ENCODE measurements at regions of chr19 and their contacts with region 1.

Region 1: DNA sequence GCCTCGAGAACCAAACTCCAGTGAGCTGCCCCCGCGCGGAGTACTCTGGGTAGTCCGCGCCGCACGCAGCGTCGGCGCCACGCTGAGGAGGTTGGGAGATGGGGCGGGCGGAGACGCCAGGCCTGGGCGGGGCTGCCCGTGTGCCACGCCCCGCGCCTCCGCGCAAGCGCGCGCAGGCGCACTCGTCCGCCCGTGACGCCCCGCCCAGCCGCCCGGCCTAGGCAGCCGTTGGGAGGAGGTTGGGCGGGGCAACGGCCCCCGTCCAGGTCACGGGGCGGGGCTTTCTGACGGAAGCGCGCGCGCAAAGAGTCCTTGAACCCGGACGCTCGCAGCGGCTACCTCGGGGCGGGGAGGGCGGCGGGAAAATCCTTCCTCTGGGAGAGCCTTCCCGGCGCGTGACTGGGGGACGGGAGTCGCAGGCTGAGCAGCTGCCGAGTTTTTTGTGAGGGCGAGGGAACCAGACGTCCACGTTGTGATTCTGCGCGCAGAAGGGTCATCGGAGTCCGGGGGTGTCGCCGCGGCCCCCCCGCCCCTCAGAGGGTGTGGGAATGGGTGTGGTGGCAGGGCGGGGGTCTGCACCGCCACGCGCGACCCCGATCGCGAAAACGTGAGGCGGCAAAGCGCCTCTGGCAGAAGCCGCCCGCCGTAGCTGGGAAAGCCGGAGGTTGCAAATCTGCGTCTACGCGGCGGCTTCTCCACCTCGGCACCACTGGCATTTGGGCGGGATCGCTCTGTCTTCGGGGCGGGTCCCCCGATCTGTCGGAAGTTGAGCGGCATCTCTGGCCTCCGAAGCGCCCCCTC is at the start of gene MED26:
- DNase-seq: peak; percentile 66 to 94
- H3K4me3 ChIP-seq: peak within 1 kb of the TSS; percentile 95 to 97
- H3K27ac ChIP-seq: peak within 1 kb of the TSS; percentile 81 to 93
- H3K4me1 ChIP-seq: peaks cover 7 to 17% of the 10 kb centered on the region in 2 donors
- H3K27me3 ChIP-seq: no peaks in the 10 kb centered on the region
- CTCF ChIP-seq: no peak
- total RNA-seq, gene MED26: 3.5 TPM

Region 2: GRCh38 chr19:16160943-16161560 is 467.3 kb before region 1 on chr19:
- intact Hi-C with region 1: no loop called
- DNase-seq: no peak
- H3K4me3 ChIP-seq: no peak overlapping the region
- H3K27ac ChIP-seq: no peak overlapping the region
- H3K4me1 ChIP-seq: no peaks in the 10 kb centered on the region
- H3K27me3 ChIP-seq: no peaks in the 10 kb centered on the region
- CTCF ChIP-seq: no peak

Region 3: GRCh38 chr19:16572332-16573211 is 55.8 kb before region 1 on chr19 and contains the start of gene SLC35E1:
- intact Hi-C with region 1: loop called (anchors 1 kb)
- DNase-seq: peak; percentile 86 to 97
- H3K4me3 ChIP-seq: peak within 1 kb of the TSS; percentile 90 to 95
- H3K27ac ChIP-seq: peak within 1 kb of the TSS; percentile 73 to 86
- H3K4me1 ChIP-seq: peaks cover 14 to 23% of the 10 kb centered on the region in 2 donors
- H3K27me3 ChIP-seq: no peaks in the 10 kb centered on the region
- CTCF ChIP-seq: no peak
- total RNA-seq, gene SLC35E1: 56.3 TPM

Region 4: DNA sequence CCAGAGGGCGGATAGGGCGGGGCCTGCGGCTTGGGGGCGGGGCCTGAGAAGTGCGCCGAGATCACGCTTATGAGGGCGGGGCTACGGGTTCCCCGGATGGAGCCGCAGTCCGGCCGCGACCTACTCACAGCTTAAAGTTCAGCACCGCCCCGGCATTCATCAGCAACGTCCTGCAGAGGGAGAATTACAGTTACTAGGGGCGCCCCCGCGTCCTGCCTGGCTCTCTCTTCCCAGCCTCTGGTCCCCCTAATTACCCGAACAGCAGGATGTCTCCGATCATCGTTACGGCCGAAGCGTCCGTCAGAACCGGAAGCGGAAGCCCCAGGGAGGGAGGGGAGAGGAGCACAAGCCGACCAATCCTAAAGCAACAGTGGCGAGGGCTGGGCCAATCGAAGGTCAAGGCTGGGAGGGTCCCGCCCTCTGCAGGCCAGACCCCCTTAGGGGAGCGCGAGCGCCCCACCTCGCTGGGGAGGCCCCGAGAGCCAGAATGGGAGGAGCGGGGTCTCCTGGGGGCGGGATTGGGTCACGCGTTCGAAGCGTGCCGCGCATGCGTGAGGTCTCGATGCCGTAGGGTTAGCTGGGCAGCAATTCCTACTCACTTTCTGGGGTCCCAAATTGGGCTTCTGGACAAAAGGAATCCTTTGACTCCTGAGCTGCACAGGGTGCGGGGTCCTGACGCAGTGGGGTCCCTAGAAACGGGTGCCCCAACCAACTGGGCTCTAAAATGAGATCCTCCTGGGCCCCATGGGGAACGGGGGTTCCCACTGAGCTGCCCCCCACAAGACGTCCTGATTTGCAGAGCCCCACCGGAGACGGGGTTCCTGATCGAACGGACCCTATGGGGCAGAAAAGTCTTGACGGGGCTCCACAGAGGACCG is 31.7 kb after region 1 on chr19 and contains the start of gene SMIM7:
- intact Hi-C with region 1: loop called (anchors 1 kb)
- DNase-seq: peak; percentile 93 to 99
- H3K4me3 ChIP-seq: peak within 1 kb of the TSS; percentile 81 to 93
- H3K27ac ChIP-seq: peak within 1 kb of the TSS; percentile 87
- H3K4me1 ChIP-seq: peaks cover 9 to 20% of the 10 kb centered on the region in 2 donors
- H3K27me3 ChIP-seq: no peaks in the 10 kb centered on the region
- CTCF ChIP-seq: no peak
- total RNA-seq, gene SMIM7: 16.7 TPM

Measured in ascending aorta (tissue), 2 donors.